CD4-positive, alpha-beta T cell (primary cell): ENCODE measurements at regions of chr10 and their contacts with region 1.

Region 1: GRCh38 chr10:33008499-33009243 is 50.6 kb upstream of the ITGB1 start:
- DNase-seq: peak; percentile 29 to 85 (median 46)
- ATAC-seq: peak; percentile 51
- H3K4me3 ChIP-seq: peak overlapping the region; percentile 32
- H3K4me3 Mint-ChIP-seq: peak overlapping the region; percentile 88
- H3K27ac ChIP-seq: peak overlapping the region in 1 of 2 donors; percentile 74
- H3K27ac Mint-ChIP-seq: peak overlapping the region; percentile 87
- H3K4me1 ChIP-seq: peaks cover 48% of the 10 kb centered on the region
- H3K4me1 Mint-ChIP-seq: peaks cover 49% of the 10 kb centered on the region
- H3K27me3 ChIP-seq: no peaks in the 10 kb centered on the region
- H3K27me3 Mint-ChIP-seq: peaks cover 6% of the 10 kb centered on the region
- CTCF ChIP-seq: peak; percentile 100

Region 2: DNA sequence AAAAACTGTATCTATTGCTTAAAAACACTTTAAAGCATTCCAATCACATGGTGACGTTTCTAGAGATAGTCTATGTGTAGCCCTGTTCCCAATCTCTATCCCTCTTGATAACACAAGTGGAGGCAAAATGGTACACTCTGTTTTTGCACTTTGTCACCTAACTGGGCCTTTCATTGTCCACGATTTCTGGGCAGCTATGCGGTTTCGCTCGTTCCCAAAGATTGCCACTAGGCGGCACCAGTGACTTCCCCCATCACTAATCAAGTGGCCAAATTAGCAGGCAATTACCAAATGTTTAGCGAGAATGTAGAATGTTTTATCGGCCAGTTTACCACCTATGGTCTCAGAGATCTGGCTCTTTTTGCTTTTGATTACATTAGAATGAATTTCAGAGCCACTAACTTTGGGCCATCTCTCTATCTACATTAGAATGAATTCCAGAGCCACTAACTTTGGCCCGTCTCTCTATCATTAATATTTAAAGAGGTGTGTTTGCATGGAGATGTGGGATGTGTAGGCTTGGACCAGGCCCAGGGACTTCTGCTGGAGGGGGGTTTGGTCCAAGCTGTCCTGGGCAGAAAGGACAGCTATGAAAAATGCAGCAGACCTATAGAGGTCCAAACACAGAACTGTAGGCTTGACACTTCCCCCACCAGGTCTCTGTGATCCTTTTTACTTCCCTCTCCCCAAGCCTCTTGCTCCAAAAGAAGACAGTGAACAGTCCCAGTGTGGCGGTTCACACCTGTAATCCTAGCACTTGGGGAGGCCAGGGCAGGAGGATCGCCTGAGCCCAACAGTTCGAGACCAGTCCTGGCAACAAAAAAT is 751.8 kb before region 1 on chr10:
- CTCF ChIA-PET with region 1: no interaction called
- POLR2A ChIA-PET with region 1: no interaction called
- intact Hi-C with region 1: loop called in 1 of 2 experiments (anchors 5 kb)
- DNase-seq: peak; percentile 43 to 84 (median 62)
- ATAC-seq: peak; percentile 78
- H3K4me3 ChIP-seq: no peak overlapping the region
- H3K4me3 Mint-ChIP-seq: no peak overlapping the region
- H3K27ac ChIP-seq: no peak overlapping the region
- H3K27ac Mint-ChIP-seq: no peak overlapping the region
- H3K4me1 ChIP-seq: peaks cover 9% of the 10 kb centered on the region
- H3K4me1 Mint-ChIP-seq: peaks cover 5% of the 10 kb centered on the region
- H3K27me3 ChIP-seq: no peaks in the 10 kb centered on the region
- H3K27me3 Mint-ChIP-seq: no peaks in the 10 kb centered on the region
- CTCF ChIP-seq: peak; percentile 92

Region 3: GRCh38 chr10:32378363-32379317 is 630.0 kb before region 1 on chr10:
- CTCF ChIA-PET with region 1: no interaction called
- POLR2A ChIA-PET with region 1: interaction called, 7 read pairs
- intact Hi-C with region 1: loop called in 1 of 2 experiments (anchors 10 kb)
- DNase-seq: peak; percentile 83 to 97 (median 90)
- ATAC-seq: peak; percentile 89
- H3K4me3 ChIP-seq: peak overlapping the region; percentile 79
- H3K4me3 Mint-ChIP-seq: no peak overlapping the region
- H3K27ac ChIP-seq: peak overlapping the region; percentile 61 to 81
- H3K27ac Mint-ChIP-seq: no peak overlapping the region
- H3K4me1 ChIP-seq: no peaks in the 10 kb centered on the region
- H3K4me1 Mint-ChIP-seq: peaks cover 20% of the 10 kb centered on the region
- H3K27me3 ChIP-seq: no peaks in the 10 kb centered on the region
- H3K27me3 Mint-ChIP-seq: no peaks in the 10 kb centered on the region
- CTCF ChIP-seq: no peak

Region 4: DNA sequence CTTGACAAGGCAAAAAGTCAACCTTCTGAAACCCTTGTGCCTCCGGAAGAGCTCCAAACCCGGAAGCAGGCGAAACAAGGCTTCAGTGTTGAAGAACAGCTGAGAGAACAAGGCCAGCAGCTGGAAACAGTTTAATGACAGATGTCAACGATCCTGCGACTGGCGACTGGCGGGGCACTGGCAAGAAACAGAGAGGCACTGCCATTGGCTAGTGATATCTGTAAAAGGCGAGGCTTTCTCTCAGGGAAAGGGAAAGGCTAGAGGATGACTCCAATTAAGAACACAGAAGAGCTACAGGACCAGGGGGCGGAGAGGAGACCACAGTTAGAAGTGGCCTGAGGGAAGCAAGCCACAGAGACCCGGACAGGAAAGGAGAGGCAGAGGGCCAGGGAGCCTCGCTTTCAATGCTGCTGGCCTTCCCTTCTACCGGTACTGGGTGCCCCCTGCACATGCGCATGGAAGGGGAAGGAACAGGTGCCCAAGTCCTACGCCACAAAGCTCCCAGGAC is 70.1 kb before region 1 on chr10:
- CTCF ChIA-PET with region 1: interaction called, 3 read pairs
- POLR2A ChIA-PET with region 1: no interaction called
- intact Hi-C with region 1: loop called in 1 of 2 experiments (anchors 5 kb)
- DNase-seq: no peak
- ATAC-seq: peak; percentile 24
- H3K4me3 ChIP-seq: no peak overlapping the region
- H3K4me3 Mint-ChIP-seq: peak overlapping the region; percentile 40
- H3K27ac ChIP-seq: no peak overlapping the region
- H3K27ac Mint-ChIP-seq: peak overlapping the region; percentile 36
- H3K4me1 ChIP-seq: peaks cover 46% of the 10 kb centered on the region
- H3K4me1 Mint-ChIP-seq: peaks cover 57% of the 10 kb centered on the region
- H3K27me3 ChIP-seq: no peaks in the 10 kb centered on the region
- H3K27me3 Mint-ChIP-seq: no peaks in the 10 kb centered on the region
- CTCF ChIP-seq: no peak

Region 5: GRCh38 chr10:33134011-33134751 is 125.5 kb after region 1 on chr10:
- CTCF ChIA-PET with region 1: interaction called, 17 read pairs
- POLR2A ChIA-PET with region 1: interaction called, 4 read pairs
- intact Hi-C with region 1: no loop called
- DNase-seq: peak in 13 of 14 experiments; percentile 49 to 90 (median 65)
- ATAC-seq: peak; percentile 67
- H3K4me3 ChIP-seq: no peak overlapping the region
- H3K4me3 Mint-ChIP-seq: peak overlapping the region; percentile 62
- H3K27ac ChIP-seq: peak overlapping the region; percentile 42 to 70
- H3K27ac Mint-ChIP-seq: peak overlapping the region; percentile 93
- H3K4me1 ChIP-seq: peaks cover 91% of the 10 kb centered on the region
- H3K4me1 Mint-ChIP-seq: peaks cover 88% of the 10 kb centered on the region
- H3K27me3 ChIP-seq: no peaks in the 10 kb centered on the region
- H3K27me3 Mint-ChIP-seq: no peaks in the 10 kb centered on the region
- CTCF ChIP-seq: no peak

Region 6: GRCh38 chr10:33155720-33156638 is 147.3 kb after region 1 on chr10:
- CTCF ChIA-PET with region 1: interaction called, 33 read pairs
- POLR2A ChIA-PET with region 1: interaction called, 8 read pairs
- intact Hi-C with region 1: loop called (anchors 2 kb)
- DNase-seq: peak in 8 of 14 experiments; percentile 17 to 83 (median 50)
- ATAC-seq: peak; percentile 83
- H3K4me3 ChIP-seq: no peak overlapping the region
- H3K4me3 Mint-ChIP-seq: peak overlapping the region; percentile 26
- H3K27ac ChIP-seq: no peak overlapping the region
- H3K27ac Mint-ChIP-seq: peak overlapping the region; percentile 15
- H3K4me1 ChIP-seq: peaks cover 44% of the 10 kb centered on the region
- H3K4me1 Mint-ChIP-seq: peaks cover 48% of the 10 kb centered on the region
- H3K27me3 ChIP-seq: no peaks in the 10 kb centered on the region
- H3K27me3 Mint-ChIP-seq: no peaks in the 10 kb centered on the region
- CTCF ChIP-seq: peak; percentile 64